Transverse colon (tissue), 4 donors: ENCODE measurements at regions of chr15 and their contacts with region 1.

Region 1: GRCh38 chr15:99954361-99955180 is 221.3 kb upstream of the LYSMD4 start:
- DNase-seq: no peak
- H3K4me3 ChIP-seq: no peak overlapping the region
- H3K27ac ChIP-seq: no peak overlapping the region
- H3K4me1 ChIP-seq: peaks cover 0 to 10% (median 0%) of the 10 kb centered on the region in 4 donors
- H3K27me3 ChIP-seq: peaks cover 6% of the 10 kb centered on the region
- CTCF ChIP-seq: no peak
- EP300 ChIP-seq: no peak
- POLR2A ChIP-seq: no peak

Region 2: DNA sequence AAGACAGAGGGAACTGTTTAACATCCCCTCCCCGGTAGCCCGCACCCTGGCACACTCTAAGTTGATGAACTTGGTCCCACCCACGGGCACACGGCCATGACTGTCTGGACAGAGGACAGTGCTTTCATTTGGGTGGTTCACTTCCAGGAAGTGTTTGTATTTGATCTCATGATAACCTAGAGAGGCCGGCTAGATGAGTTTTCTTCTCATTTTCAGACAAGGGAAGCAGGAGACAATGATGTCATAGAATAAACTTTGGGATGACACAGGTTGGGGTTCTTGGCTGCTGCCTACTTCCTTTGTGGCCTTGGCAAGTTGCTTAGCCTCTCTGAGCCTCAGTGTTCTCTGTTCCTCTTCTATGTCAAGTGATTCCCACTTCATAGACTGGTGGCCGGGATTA is 205.2 kb before region 1 on chr15:
- in situ Hi-C with region 1: no loop called
- intact Hi-C with region 1: no loop called
- DNase-seq: peak; percentile 33
- H3K4me3 ChIP-seq: no peak overlapping the region
- H3K27ac ChIP-seq: no peak overlapping the region
- H3K4me1 ChIP-seq: no peaks in the 10 kb centered on the region
- H3K27me3 ChIP-seq: no peaks in the 10 kb centered on the region
- CTCF ChIP-seq: no peak
- EP300 ChIP-seq: no peak
- POLR2A ChIP-seq: no peak

Region 3: DNA sequence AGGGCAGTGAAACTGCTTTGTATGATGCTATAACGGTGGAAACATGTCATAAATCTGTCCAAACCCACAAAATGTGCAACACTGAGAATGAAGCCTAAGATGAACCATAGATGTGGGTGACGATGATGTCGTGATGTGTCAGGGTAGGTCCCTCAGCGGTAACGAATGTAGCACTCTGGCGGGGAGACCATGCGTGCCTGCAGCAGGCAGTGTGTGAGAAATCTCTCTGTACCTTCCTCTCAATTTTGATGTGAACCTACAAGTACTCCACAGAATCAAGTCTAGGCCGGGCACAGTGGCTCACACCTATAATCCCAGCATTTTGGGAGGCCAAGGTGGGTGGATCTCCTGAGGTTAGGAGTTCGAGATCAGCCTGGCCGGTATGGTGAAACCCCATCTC is 46.8 kb after region 1 on chr15:
- in situ Hi-C with region 1: no loop called
- intact Hi-C with region 1: loop called (anchors 5 kb)
- DNase-seq: no peak
- H3K4me3 ChIP-seq: no peak overlapping the region
- H3K27ac ChIP-seq: no peak overlapping the region
- H3K4me1 ChIP-seq: no peaks in the 10 kb centered on the region
- H3K27me3 ChIP-seq: no peaks in the 10 kb centered on the region
- CTCF ChIP-seq: no peak
- EP300 ChIP-seq: no peak
- POLR2A ChIP-seq: no peak

Region 4: GRCh38 chr15:100328796-100329195 is 374.2 kb after region 1 on chr15:
- in situ Hi-C with region 1: loop called in 1 of 4 experiments (anchors 10 kb)
- intact Hi-C with region 1: no loop called
- DNase-seq: no peak
- H3K4me3 ChIP-seq: no peak overlapping the region
- H3K27ac ChIP-seq: no peak overlapping the region
- H3K4me1 ChIP-seq: no peaks in the 10 kb centered on the region
- H3K27me3 ChIP-seq: no peaks in the 10 kb centered on the region
- CTCF ChIP-seq: no peak
- EP300 ChIP-seq: no peak
- POLR2A ChIP-seq: no peak